PC-9 (cell line): ENCODE measurements at regions of chr16 and their contacts with region 1.

Region 1: GRCh38 chr16:30829130-30830071 is 42.4 kb upstream of the ZNF629 start:
- DNase-seq: no peak
- H3K4me3 ChIP-seq: no peak overlapping the region
- H3K27ac ChIP-seq: no peak overlapping the region
- H3K4me1 ChIP-seq: peaks cover 9% of the 10 kb centered on the region; the same call in 1 of the 2 replicates
- H3K27me3 ChIP-seq: peaks cover 5% of the 10 kb centered on the region; the same call in 1 of the 2 replicates
- CTCF ChIP-seq: no peak

Region 2: DNA sequence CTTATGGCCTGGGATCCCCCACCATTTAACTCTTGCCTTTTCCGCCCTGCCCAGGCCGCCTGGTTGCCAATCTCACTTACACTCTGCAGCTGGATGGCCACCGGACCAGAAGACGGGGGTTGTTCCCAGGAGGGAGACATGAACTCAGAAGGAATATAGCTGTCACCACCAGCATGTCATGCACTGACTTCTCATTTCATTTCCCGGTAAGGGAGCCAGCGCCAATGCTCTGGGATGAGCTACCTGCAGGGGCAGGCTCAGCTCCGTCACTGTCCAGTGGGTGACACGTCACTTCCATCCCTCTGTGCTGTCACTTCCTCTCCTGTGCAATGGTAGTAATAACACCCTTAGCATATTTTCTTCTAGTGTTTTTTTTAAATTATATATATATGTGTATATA is 330.1 kb before region 1 on chr16:
- CTCF ChIA-PET with region 1: no interaction called
- POLR2A ChIA-PET with region 1: interaction called, 22 read pairs
- intact Hi-C with region 1: no loop called
- DNase-seq: no peak
- H3K4me3 ChIP-seq: no peak overlapping the region
- H3K27ac ChIP-seq: no peak overlapping the region
- H3K4me1 ChIP-seq: no peaks in the 10 kb centered on the region
- H3K27me3 ChIP-seq: peaks cover 6% of the 10 kb centered on the region; the same call in 1 of the 2 replicates
- CTCF ChIP-seq: no peak

Region 3: GRCh38 chr16:30813821-30814189 is 15.6 kb before region 1 on chr16:
- CTCF ChIA-PET with region 1: interaction called, 11 read pairs
- POLR2A ChIA-PET with region 1: no interaction called
- intact Hi-C with region 1: no loop called
- DNase-seq: no peak
- H3K4me3 ChIP-seq: peak overlapping the region; percentile 53
- H3K27ac ChIP-seq: peak overlapping the region; percentile 16; the same call in 1 of the 2 replicates
- H3K4me1 ChIP-seq: peaks cover 9% of the 10 kb centered on the region
- H3K27me3 ChIP-seq: no peaks in the 10 kb centered on the region
- CTCF ChIP-seq: no peak

Region 4: DNA sequence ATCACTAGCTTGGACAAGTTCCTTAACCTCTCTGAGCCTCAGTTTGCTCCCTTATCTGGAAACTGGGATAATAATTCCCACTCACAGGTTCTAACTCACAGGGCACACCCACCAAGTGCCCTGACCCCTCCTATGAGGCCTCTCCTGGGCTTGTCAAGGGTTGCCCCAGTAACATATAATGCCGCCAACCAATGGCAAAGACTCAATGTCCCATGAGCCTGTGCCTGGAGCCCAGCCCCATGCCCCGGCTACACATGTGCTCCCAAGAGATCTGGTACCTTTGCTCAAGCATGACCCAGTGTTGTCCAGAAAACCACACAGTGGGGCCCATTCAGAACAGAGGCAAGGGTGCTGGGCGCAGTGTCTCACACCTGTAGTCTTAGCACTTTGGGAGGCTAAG is 85.4 kb after region 1 on chr16:
- CTCF ChIA-PET with region 1: no interaction called
- POLR2A ChIA-PET with region 1: interaction called, 10 read pairs
- intact Hi-C with region 1: no loop called
- DNase-seq: no peak
- H3K4me3 ChIP-seq: no peak overlapping the region
- H3K27ac ChIP-seq: no peak overlapping the region
- H3K4me1 ChIP-seq: no peaks in the 10 kb centered on the region
- H3K27me3 ChIP-seq: no peaks in the 10 kb centered on the region
- CTCF ChIP-seq: no peak